Activated naive CD4-positive, alpha-beta T cell treated with anti-CD3 and anti-CD28 coated beads for 36 hours (primary cell): ENCODE measurements at regions of chr11 and their contacts with region 1.

Region 1: DNA sequence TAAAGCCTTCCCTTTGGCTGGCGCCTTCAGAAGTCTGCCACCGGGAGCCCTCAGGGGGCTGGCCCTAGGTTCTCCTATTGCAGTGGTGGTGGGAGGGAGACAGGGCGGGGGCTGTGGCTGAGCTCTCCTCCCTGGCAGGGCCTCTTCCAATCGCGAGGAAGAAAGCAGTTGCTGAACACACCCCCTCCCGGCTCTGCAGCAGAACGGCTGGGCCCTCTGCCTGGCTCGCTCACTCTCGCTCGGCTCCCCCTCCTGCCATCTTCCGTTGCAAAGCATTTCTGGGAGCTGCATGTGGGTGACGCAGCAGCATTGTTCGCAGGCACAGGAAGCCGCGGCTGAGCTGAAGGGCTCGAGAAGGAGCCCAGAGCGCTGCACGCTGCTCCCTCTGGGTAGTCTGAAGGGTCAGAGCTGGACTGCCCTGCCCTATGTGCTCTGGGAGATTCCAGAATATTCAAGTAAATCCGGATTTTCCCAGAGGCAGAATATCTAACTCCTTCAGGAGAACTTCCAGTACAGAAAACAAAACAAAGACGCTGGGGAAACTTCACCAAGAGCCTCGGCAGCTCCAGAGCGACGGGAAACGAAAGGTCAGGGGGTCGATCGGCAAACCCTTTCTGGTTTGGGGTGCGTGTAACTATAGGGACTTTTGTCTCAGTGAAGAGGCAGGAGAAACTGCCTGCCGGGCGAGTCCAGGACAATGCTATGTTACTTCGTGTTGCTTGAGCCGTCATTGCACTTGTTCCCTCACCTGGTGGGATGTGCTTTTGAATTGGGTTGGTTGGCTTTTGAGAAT is 26.3 kb upstream of the GRK2 start:
- DNase-seq: peak; percentile 98
- H3K4me3 Mint-ChIP-seq: peak overlapping the region; percentile 86
- H3K27ac Mint-ChIP-seq: peak overlapping the region; percentile 99
- H3K4me1 Mint-ChIP-seq: peaks cover 46% of the 10 kb centered on the region
- H3K27me3 Mint-ChIP-seq: no peaks in the 10 kb centered on the region

Region 2: DNA sequence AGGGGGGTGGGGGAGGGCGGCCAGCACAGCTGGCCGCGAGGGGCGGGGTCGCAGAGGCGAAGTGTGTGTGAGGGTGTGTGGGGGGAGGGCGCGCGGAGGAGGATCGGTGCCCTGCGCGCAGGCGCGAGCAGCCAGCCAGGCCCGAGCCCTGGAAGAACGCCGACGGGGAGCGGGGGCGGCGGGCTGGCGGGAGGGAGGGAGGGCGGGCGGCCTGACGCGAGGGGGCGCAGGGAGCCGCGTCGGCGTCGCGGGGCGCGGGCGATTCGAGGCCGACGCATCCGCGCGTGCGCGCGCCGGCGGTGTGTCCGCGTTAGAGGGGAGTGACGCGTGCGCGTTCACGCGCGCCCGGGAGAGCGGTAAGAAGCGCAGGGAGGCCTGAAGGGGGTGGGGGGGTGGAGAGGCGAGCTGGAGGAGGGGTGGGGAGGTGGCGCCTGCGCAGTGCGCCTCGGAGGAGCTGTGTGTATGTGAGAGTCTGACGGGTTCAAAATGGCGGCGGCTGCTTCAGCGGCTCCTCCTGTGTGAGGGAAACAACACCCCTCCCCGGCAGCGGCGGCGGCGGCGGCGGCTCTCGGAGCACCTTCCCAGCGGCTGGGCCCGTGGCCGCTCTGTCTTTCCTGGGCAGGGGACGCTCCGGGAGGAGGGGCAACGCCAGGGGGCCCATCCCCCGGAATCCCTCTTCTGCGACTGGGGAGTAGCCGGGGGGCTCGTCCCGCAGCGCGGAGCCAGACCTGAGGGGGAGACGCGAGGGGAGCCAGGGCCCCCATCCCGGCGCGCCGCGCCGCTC is 121.0 kb before region 1 on chr11 and contains the start of gene KDM2A:
- CTCF ChIA-PET with region 1: no interaction called
- intact Hi-C with region 1: loop called (anchors 1 kb)
- DNase-seq: peak; percentile 99
- H3K4me3 Mint-ChIP-seq: peak within 1 kb of the TSS; percentile 97
- H3K27ac Mint-ChIP-seq: peak within 1 kb of the TSS; percentile 92
- H3K4me1 Mint-ChIP-seq: peaks cover 41% of the 10 kb centered on the region
- H3K27me3 Mint-ChIP-seq: no peaks in the 10 kb centered on the region
- total RNA-seq, gene KDM2A: 57.7 to 58.8 TPM

Region 3: GRCh38 chr11:67136156-67136555 is 103.8 kb before region 1 on chr11:
- CTCF ChIA-PET with region 1: no interaction called
- intact Hi-C with region 1: no loop called
- DNase-seq: no peak
- H3K4me3 Mint-ChIP-seq: no peak overlapping the region
- H3K27ac Mint-ChIP-seq: no peak overlapping the region
- H3K4me1 Mint-ChIP-seq: peaks cover 7% of the 10 kb centered on the region
- H3K27me3 Mint-ChIP-seq: no peaks in the 10 kb centered on the region

Region 4: DNA sequence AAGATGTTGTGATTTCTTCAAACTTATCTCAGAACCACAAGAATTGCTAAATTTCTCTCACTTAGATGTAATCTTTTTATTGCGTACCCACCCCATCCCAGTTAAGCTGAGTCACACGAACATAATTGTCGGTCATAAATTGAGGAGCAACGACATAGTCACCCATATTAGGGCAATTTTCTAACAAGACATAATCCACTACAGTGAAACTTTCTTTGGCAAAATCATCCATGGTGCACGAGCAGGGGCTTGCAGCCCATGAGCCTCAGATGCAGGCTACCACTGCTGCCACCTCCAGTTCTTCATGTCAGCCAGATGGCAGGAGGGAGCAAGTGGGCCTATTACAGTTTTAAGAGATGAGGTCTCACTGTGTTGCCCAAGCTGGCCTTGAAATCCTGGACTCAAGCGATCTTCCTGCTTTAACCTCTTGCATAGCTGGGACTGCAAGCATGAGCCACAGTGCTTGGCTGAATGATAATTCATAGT is 44.0 kb before region 1 on chr11:
- CTCF ChIA-PET with region 1: no interaction called
- intact Hi-C with region 1: loop called (anchors 5 kb)
- DNase-seq: no peak
- H3K4me3 Mint-ChIP-seq: no peak overlapping the region
- H3K27ac Mint-ChIP-seq: peak overlapping the region; percentile 4
- H3K4me1 Mint-ChIP-seq: peaks cover 3% of the 10 kb centered on the region
- H3K27me3 Mint-ChIP-seq: no peaks in the 10 kb centered on the region

Region 5: GRCh38 chr11:67277231-67277961 is 37.4 kb after region 1 on chr11:
- CTCF ChIA-PET with region 1: no interaction called
- intact Hi-C with region 1: loop called (anchors 2 kb)
- DNase-seq: peak; percentile 95
- H3K4me3 Mint-ChIP-seq: peak overlapping the region; percentile 73
- H3K27ac Mint-ChIP-seq: peak overlapping the region; percentile 99
- H3K4me1 Mint-ChIP-seq: peaks cover 69% of the 10 kb centered on the region
- H3K27me3 Mint-ChIP-seq: no peaks in the 10 kb centered on the region

Region 6: DNA sequence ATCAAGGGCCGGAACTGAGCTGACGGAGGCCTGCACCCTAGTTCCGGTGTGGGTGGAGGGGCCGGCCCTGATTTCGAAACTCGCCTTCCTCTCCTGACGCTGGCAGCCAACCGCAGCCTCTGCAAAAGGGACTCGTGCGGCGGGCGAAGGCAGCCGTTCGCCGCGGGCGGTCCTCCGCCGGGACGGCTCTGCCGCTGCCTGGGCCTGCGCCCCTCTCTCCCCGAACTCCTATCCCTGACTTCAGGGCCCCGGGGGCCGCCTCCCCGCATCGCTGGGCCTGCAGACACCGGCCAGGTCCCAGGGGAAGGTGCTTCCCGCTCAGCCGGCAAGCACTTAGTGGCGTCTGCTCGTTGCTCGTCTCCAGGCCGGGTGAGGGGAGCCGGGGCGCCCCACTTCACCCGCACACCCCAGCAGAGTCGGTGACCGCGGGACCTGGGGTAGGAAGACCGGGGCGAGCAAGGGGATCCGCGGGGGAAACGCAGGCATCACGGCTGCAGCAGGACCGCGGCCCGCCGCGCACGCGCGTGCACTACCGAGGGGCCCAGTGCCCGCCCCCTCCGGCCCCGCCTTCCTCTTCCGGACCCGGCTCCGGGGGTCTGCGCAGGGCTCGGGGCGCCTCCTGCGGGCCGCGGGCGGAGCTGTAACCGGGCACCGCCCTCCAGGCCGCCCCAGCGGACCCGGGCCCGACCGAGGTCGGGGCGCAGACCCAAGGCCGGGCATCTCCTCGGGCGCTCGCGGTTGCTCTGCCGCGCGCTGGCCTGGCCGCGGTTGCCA is 48.7 kb after region 1 on chr11:
- CTCF ChIA-PET with region 1: no interaction called
- intact Hi-C with region 1: loop called (anchors 1 kb)
- DNase-seq: peak; percentile 95
- H3K4me3 Mint-ChIP-seq: peak overlapping the region; percentile 71
- H3K27ac Mint-ChIP-seq: peak overlapping the region; percentile 96
- H3K4me1 Mint-ChIP-seq: peaks cover 47% of the 10 kb centered on the region
- H3K27me3 Mint-ChIP-seq: no peaks in the 10 kb centered on the region

Region 7: GRCh38 chr11:67311556-67312082 is 71.6 kb after region 1 on chr11:
- CTCF ChIA-PET with region 1: no interaction called
- intact Hi-C with region 1: no loop called
- DNase-seq: no peak
- H3K4me3 Mint-ChIP-seq: no peak overlapping the region
- H3K27ac Mint-ChIP-seq: no peak overlapping the region
- H3K4me1 Mint-ChIP-seq: peaks cover 28% of the 10 kb centered on the region
- H3K27me3 Mint-ChIP-seq: no peaks in the 10 kb centered on the region

Region 8: DNA sequence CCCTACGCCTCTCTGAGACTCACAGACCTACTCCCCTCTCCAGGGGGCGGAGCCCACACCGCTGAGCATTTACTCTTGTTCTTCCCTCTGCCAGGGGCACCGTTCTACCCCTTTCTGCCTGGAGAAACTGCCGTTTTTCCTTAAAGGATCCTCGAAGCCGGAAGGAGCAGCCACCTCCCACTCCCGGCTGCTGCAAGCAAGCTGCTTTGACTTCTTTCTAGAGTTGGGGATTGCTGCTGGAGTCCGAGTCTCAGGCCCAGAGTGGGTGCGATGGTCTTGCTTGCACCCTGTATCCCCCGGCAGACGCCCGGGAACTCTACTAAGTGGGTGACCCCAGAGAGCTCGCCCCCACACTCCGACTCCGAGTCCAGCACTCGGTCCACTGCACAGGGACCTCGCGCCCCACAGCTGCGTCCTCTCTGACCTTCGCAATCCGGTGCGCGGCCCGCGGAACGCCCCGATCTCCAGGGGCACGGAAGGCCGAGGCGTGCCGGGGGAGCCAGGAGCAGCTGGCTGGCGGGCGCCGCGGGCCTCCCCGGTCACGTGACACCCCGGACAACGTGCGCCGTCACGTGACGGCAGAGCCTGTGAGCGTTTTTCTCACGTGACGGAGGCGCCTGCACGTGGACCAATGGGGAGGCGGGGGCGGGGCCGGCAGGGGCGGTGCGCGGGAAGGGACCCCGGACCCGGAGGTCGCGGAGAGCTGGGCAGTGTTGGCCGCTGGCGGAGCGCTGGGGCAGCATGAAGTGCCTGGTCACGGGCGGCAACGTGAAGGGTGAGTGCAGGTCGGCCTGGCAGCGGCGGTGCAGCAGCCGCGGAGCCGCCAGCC is 151.5 kb after region 1 on chr11 and contains the start of gene RAD9A:
- CTCF ChIA-PET with region 1: no interaction called
- intact Hi-C with region 1: loop called (anchors 5 kb)
- DNase-seq: peak; percentile 93
- H3K4me3 Mint-ChIP-seq: peak within 1 kb of the TSS; percentile 86
- H3K27ac Mint-ChIP-seq: peak within 1 kb of the TSS; percentile 51
- H3K4me1 Mint-ChIP-seq: peaks cover 31% of the 10 kb centered on the region
- H3K27me3 Mint-ChIP-seq: no peaks in the 10 kb centered on the region
- total RNA-seq, gene RAD9A: 29.5 to 30.7 TPM

Region 9: GRCh38 chr11:67665541-67666362 is 425.8 kb after region 1 on chr11:
- CTCF ChIA-PET with region 1: no interaction called
- intact Hi-C with region 1: no loop called
- DNase-seq: no peak
- H3K4me3 Mint-ChIP-seq: no peak overlapping the region
- H3K27ac Mint-ChIP-seq: no peak overlapping the region
- H3K4me1 Mint-ChIP-seq: no peaks in the 10 kb centered on the region
- H3K27me3 Mint-ChIP-seq: no peaks in the 10 kb centered on the region

Region 10: GRCh38 chr11:68051191-68052144 is 811.5 kb after region 1 on chr11:
- CTCF ChIA-PET with region 1: no interaction called
- intact Hi-C with region 1: no loop called
- DNase-seq: no peak
- H3K4me3 Mint-ChIP-seq: no peak overlapping the region
- H3K27ac Mint-ChIP-seq: no peak overlapping the region
- H3K4me1 Mint-ChIP-seq: no peaks in the 10 kb centered on the region
- H3K27me3 Mint-ChIP-seq: no peaks in the 10 kb centered on the region